ENCODE measurements at regions of chr17 and their contacts with region 1.

Region 1: GRCh38 chr17:45648642-45649041 is 135.5 kb upstream of the CRHR1 start:
- DNase-seq: no peak
- H3K4me3 ChIP-seq: no peak overlapping the region
- H3K27ac ChIP-seq: no peak overlapping the region
- H3K4me1 ChIP-seq: no peaks in the 10 kb centered on the region
- H3K27me3 ChIP-seq: no peaks in the 10 kb centered on the region
- CTCF ChIP-seq: peak; percentile 22 to 59

Region 2: DNA sequence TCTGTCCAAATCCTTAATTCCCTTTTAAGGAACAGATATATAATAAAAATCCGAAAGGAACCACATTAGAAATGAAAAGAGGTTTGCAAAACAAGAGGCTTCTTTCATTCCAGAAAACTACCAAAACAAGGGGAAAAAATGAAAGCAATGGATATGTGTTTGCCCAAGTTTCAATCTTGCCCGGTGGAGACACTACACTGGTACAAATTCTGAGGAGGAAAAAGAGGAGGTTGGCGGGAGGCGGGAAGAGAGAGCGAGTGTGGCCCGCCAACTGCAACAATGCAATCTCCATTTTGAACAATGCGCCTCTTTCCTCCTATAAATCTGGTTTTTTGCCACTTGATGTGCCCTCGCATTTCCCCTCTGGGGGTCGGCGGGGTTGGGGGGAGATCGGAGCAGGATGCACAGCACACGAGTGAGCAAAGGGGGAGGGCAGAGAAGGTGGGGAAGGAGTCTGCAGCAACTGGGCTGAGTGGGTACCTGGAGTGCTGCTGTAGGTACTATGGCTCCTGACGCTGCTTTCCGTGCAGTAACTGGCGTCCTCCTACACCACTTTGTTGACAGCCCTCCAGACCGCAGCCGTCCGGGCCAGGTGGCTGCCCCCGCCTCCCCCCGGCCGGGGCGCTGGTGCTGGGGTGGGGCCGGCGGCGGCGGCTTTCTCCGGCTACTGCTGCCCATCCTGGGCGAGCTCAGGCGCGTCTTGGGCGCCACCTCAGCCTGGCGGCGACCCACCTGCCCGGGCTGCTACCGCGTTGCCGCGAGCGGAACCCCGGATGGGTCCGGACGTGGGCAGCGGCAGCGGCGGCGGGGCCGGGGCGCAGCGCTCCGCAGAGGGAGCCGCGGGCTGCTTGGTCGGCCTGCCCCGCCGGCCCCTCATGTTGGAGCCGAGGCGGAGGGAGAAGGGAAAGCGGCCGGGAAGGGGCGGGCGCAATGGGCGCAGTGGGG is 64.3 kb before region 1 on chr17:
- CTCF ChIA-PET with region 1: no interaction called
- dilution Hi-C with region 1: no loop called
- in situ Hi-C with region 1: no loop called
- intact Hi-C with region 1: no loop called
- DNase-seq: peak; percentile 85
- H3K4me3 ChIP-seq: peak overlapping the region; percentile 64 to 67 (median 65)
- H3K27ac ChIP-seq: peak overlapping the region; percentile 87
- H3K4me1 ChIP-seq: peaks cover 16% of the 10 kb centered on the region
- H3K27me3 ChIP-seq: no peaks in the 10 kb centered on the region
- CTCF ChIP-seq: no peak

Region 3: DNA sequence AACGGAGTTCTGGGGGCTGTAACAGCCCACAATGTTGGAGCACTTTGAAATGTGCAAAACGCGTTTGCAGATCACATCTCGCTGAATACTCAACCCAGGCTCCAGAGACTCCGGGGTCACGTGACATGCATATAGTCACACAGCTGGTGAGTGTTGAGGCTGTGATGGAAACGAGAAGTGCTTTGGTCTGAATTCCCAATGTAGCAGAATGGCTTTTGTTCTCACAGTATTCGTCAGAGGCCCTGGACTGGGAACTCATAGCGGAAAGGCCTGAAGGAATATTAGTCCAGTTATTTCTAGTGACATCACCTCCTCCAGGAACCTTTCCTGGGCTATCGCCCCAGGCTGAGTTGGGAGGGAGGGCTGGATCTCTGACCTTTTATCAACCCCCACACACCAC is 39.7 kb after region 1 on chr17:
- CTCF ChIA-PET with region 1: no interaction called
- dilution Hi-C with region 1: loop called (anchors 5 kb)
- in situ Hi-C with region 1: no loop called
- intact Hi-C with region 1: no loop called
- DNase-seq: no peak
- H3K4me3 ChIP-seq: no peak overlapping the region
- H3K27ac ChIP-seq: no peak overlapping the region
- H3K4me1 ChIP-seq: no peaks in the 10 kb centered on the region
- H3K27me3 ChIP-seq: peaks cover 18% of the 10 kb centered on the region
- CTCF ChIP-seq: no peak

Region 4: DNA sequence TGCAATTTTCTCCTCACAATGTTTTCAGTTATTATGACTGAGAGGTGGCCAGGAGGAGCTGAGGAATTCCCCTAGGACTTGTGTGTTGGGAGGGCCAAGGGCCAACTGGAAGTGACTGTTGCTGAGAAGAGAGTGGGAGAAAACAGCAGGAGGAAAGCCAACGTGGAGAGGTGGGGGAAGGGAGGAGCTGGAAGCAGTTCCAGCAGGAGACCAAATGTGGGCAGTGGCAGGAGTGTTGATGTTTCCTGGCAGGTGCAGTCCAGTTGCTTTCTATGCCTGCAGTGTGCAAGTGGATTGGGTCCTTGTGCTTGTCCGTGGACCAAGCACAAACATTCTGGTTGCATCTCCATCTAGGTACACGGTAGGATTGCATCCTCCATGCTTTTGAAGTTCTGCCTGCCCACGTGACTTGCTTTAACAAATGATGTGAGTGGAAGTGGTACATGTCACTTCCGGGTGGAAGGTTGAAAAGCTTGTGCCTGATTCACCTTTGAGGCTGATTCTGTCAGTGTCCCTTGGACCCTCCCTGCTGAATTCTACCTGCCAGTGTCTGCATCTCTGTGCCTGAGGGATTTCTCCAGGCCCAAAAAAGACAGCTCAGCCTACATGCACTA is 80.8 kb after region 1 on chr17:
- CTCF ChIA-PET with region 1: no interaction called
- dilution Hi-C with region 1: loop called (anchors 5 kb)
- in situ Hi-C with region 1: no loop called
- intact Hi-C with region 1: no loop called
- DNase-seq: no peak
- H3K4me3 ChIP-seq: no peak overlapping the region
- H3K27ac ChIP-seq: no peak overlapping the region
- H3K4me1 ChIP-seq: no peaks in the 10 kb centered on the region
- H3K27me3 ChIP-seq: no peaks in the 10 kb centered on the region
- CTCF ChIP-seq: no peak

Region 5: GRCh38 chr17:45834471-45835396 is 186.1 kb after region 1 on chr17:
- CTCF ChIA-PET with region 1: no interaction called
- dilution Hi-C with region 1: loop called (anchors 25 kb)
- in situ Hi-C with region 1: loop called (anchors 5 kb)
- intact Hi-C with region 1: loop called (anchors 2 kb)
- DNase-seq: no peak
- H3K4me3 ChIP-seq: no peak overlapping the region
- H3K27ac ChIP-seq: no peak overlapping the region
- H3K4me1 ChIP-seq: no peaks in the 10 kb centered on the region
- H3K27me3 ChIP-seq: no peaks in the 10 kb centered on the region
- CTCF ChIP-seq: no peak

Region 6: GRCh38 chr17:45948881-45949624 is 300.4 kb after region 1 on chr17:
- CTCF ChIA-PET with region 1: no interaction called
- dilution Hi-C with region 1: loop called (anchors 10 kb)
- in situ Hi-C with region 1: no loop called
- intact Hi-C with region 1: no loop called
- DNase-seq: peak; percentile 40
- H3K4me3 ChIP-seq: peak overlapping the region in 1 of 3 experiments; percentile 15
- H3K27ac ChIP-seq: no peak overlapping the region
- H3K4me1 ChIP-seq: no peaks in the 10 kb centered on the region
- H3K27me3 ChIP-seq: no peaks in the 10 kb centered on the region
- CTCF ChIP-seq: peak; percentile 47 to 77

Measured in mammary epithelial cell (primary cell).